Stomach (tissue), 19 donors: ENCODE measurements at regions of chr13 and their contacts with region 1.

Region 1: DNA sequence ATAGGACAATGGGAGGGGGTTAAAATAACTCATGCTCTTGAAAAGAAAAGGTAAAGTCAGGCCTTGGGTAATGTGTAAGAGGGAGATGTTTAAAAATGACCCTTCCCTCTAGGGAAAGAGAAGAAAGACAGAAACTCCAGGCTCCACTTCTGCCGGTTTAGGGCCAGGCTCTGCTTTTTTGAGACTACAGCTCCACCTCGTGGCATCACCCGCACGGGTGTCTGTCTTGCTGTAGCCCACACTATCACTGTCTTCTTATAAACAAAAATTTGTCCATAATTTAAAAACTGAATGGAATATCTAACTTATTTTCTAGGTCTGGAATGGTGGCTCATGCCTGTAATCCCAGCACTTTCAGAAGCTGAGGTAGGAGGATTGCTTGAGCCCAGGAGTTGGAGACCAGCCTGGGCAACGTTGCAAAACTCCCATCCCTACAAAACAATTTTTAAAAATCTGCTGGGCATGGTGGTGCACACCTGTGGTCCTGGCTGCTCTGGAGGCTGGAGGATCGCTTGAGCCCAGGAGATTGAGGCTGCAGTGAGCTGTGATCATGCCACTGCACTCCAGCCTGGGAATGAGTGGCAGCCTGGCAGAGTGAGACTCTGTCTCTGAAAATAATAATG is 65.1 kb upstream of the GTF3A start:
- DNase-seq: peak; percentile 71 to 89
- H3K4me3 ChIP-seq: no peak overlapping the region
- H3K27ac ChIP-seq: no peak overlapping the region
- H3K4me1 ChIP-seq: peaks cover 0 to 18% (median 11%) of the 10 kb centered on the region in 4 donors
- H3K27me3 ChIP-seq: peaks cover 0 to 11% (median 0%) of the 10 kb centered on the region in 3 donors
- CTCF ChIP-seq: peak in 5 of 7 experiments; percentile 40 to 84 (median 69)
- EP300 ChIP-seq: no peak
- POLR2A ChIP-seq: no peak

Region 2: GRCh38 chr13:26985285-26985878 is 373.9 kb before region 1 on chr13:
- intact Hi-C with region 1: loop called (anchors 5 kb)
- DNase-seq: peak; percentile 78 to 93
- H3K4me3 ChIP-seq: no peak overlapping the region
- H3K27ac ChIP-seq: peak overlapping the region in 2 of 5 donors; percentile 81 to 84
- H3K4me1 ChIP-seq: peaks cover 3 to 35% (median 25%) of the 10 kb centered on the region in 4 donors
- H3K27me3 ChIP-seq: no peaks in the 10 kb centered on the region
- CTCF ChIP-seq: peak in 5 of 7 experiments; percentile 51 to 83 (median 80)
- EP300 ChIP-seq: no peak
- POLR2A ChIP-seq: no peak

Region 3: DNA sequence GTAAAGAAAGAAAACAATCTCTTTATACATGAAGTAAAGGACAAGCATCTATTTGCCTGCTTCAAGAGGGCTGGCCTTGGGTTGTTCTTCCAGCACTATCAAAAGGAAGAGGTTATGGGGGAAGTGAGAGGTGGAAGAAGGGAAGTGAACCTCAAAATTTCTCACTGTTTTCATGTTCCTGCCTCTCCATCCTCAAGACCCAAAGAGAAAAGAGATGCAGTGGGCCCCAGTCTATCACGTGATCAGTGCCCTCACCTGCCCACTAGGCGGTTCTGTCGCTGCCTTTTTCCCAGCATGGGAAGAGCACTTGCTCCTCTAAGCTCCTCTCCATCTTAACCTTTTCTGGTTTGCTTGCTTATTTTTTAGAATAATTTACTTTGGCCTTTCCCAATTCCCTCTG is 181.5 kb before region 1 on chr13:
- intact Hi-C with region 1: no loop called
- DNase-seq: no peak
- H3K4me3 ChIP-seq: no peak overlapping the region
- H3K27ac ChIP-seq: no peak overlapping the region
- H3K4me1 ChIP-seq: peaks cover 1 to 5% (median 2%) of the 10 kb centered on the region in 4 donors
- H3K27me3 ChIP-seq: no peaks in the 10 kb centered on the region
- CTCF ChIP-seq: no peak
- EP300 ChIP-seq: no peak
- POLR2A ChIP-seq: no peak